WTC11 (cell line): ENCODE measurements at regions of chr1 and their contacts with region 1.

Region 1: GRCh38 chr1:16946646-16947045 is 24.9 kb downstream of the CROCC start:
- DNase-seq: no peak
- ATAC-seq: no peak
- H3K4me3 Mint-ChIP-seq: no peak overlapping the region
- H3K27ac Mint-ChIP-seq: no peak overlapping the region
- H3K4me1 Mint-ChIP-seq: no peaks in the 10 kb centered on the region
- H3K27me3 Mint-ChIP-seq: no peaks in the 10 kb centered on the region
- CTCF ChIP-seq: no peak

Region 2: DNA sequence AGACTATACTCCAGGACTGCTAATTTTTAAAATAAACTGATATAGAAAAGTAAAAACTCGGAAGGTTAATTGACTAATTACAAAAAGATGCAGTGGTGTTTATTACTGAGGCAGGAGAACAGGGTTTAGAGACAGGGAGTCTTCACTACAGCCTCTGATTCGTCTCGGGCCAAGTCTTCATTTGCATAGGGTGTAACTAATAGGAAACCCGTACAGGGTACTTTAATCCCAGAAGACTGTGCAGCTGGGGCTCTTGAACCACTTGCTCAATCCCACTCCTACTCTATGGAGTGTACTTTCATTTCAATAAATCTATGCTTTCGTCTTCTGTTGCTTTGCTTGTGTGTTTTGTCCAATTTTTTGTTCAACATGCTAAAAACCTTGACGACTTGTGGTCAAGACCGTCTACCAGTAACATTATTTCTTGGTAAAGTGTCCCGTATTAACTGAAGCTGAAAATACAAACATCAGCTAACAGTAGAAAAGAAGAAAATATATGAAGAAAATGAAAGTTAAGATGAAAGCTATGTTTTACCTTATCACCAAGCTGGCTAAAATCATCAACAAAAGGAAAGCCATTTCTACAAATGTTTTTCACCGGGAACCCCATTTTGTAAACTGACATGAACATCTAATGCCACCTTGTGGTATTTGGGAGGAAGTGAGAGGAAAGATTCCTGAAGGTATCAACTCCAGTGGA is 99.1 kb after region 1 on chr1:
- CTCF ChIA-PET with region 1: interaction called, 10 read pairs
- POLR2A ChIA-PET with region 1: no interaction called
- DNase-seq: no peak
- ATAC-seq: peak; percentile 26; the same call in 1 of the 2 replicates
- H3K4me3 Mint-ChIP-seq: no peak overlapping the region
- H3K27ac Mint-ChIP-seq: peak overlapping the region; percentile 82
- H3K4me1 Mint-ChIP-seq: peaks cover 4% of the 10 kb centered on the region
- H3K27me3 Mint-ChIP-seq: no peaks in the 10 kb centered on the region
- CTCF ChIP-seq: no peak